Natural killer cell (primary cell): ENCODE measurements at regions of chr2 and their contacts with region 1.

Region 1: GRCh38 chr2:151289369-151290088 is at the start of gene NMI:
- DNase-seq: peak; percentile 70 to 77
- ATAC-seq: peak; percentile 71 to 81 (median 74)
- H3K4me3 ChIP-seq: peak within 1 kb of the TSS; percentile 79
- H3K4me3 Mint-ChIP-seq: peak within 1 kb of the TSS; percentile 94
- H3K27ac ChIP-seq: peak within 1 kb of the TSS; percentile 93
- H3K27ac Mint-ChIP-seq: peak within 1 kb of the TSS; percentile 82 to 96
- H3K4me1 ChIP-seq: peaks cover 19% of the 10 kb centered on the region
- H3K4me1 Mint-ChIP-seq: peaks cover 24 to 35% of the 10 kb centered on the region in 2 donors
- H3K27me3 ChIP-seq: no peaks in the 10 kb centered on the region
- H3K27me3 Mint-ChIP-seq: no peaks in the 10 kb centered on the region
- CTCF ChIP-seq: no peak
- total RNA-seq, gene NMI: 19.5 to 32.8 (median 23.0) TPM

Region 2: GRCh38 chr2:149587220-149587949 is 1702.1 kb before region 1 on chr2 and contains the start of gene MMADHC:
- intact Hi-C with region 1: loop called (anchors 1 kb)
- DNase-seq: peak; percentile 90 to 97
- ATAC-seq: peak; percentile 92 to 97 (median 95)
- H3K4me3 ChIP-seq: peak within 1 kb of the TSS; percentile 67
- H3K4me3 Mint-ChIP-seq: peak within 1 kb of the TSS; percentile 97
- H3K27ac ChIP-seq: peak within 1 kb of the TSS; percentile 88
- H3K27ac Mint-ChIP-seq: peak within 1 kb of the TSS; percentile 97 to 99
- H3K4me1 ChIP-seq: peaks cover 10% of the 10 kb centered on the region
- H3K4me1 Mint-ChIP-seq: peaks cover 46 to 57% of the 10 kb centered on the region in 2 donors
- H3K27me3 ChIP-seq: no peaks in the 10 kb centered on the region
- H3K27me3 Mint-ChIP-seq: peaks cover 14 to 24% of the 10 kb centered on the region in 2 donors
- CTCF ChIP-seq: no peak
- total RNA-seq, gene MMADHC: 59.6 to 73.9 (median 65.7) TPM

Region 3: GRCh38 chr2:150681120-150681804 is 608.3 kb before region 1 on chr2:
- intact Hi-C with region 1: no loop called
- DNase-seq: no peak
- ATAC-seq: no peak
- H3K4me3 ChIP-seq: no peak overlapping the region
- H3K4me3 Mint-ChIP-seq: no peak overlapping the region
- H3K27ac ChIP-seq: no peak overlapping the region
- H3K27ac Mint-ChIP-seq: no peak overlapping the region
- H3K4me1 ChIP-seq: no peaks in the 10 kb centered on the region
- H3K4me1 Mint-ChIP-seq: no peaks in the 10 kb centered on the region
- H3K27me3 ChIP-seq: no peaks in the 10 kb centered on the region
- H3K27me3 Mint-ChIP-seq: no peaks in the 10 kb centered on the region
- CTCF ChIP-seq: no peak